Mammary epithelial cell (primary cell): ENCODE measurements at regions of chr2 and their contacts with region 1.

Region 1: GRCh38 chr2:72887754-72888437 is 688 bp downstream of the SPR start:
- DNase-seq: peak; percentile 83
- H3K4me3 ChIP-seq: peak overlapping the region; percentile 66 to 79 (median 75)
- H3K27ac ChIP-seq: no peak overlapping the region
- H3K4me1 ChIP-seq: peaks cover 13% of the 10 kb centered on the region
- H3K27me3 ChIP-seq: no peaks in the 10 kb centered on the region
- CTCF ChIP-seq: peak; percentile 95 to 97

Region 2: DNA sequence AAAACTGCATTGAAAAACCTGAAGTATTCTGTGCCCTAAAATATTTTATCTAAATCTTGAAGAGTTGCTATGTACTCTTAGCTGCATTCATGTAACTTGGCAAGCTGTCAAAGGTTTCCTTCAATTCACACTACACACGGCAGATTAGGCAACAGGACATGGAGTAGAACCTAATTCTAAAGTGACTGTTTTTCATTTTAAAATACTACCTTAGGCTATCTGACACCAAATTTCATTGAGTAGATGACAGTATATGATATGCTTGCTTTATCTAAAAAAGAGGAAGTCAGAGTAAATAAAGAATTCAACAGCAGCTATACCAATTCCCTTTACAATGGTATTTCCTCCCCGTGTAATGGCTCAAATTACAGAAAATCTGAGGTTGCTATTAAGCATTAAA is 107.4 kb before region 1 on chr2:
- CTCF ChIA-PET with region 1: no interaction called
- dilution Hi-C with region 1: loop called (anchors 5 kb)
- in situ Hi-C with region 1: no loop called
- intact Hi-C with region 1: no loop called
- DNase-seq: peak; percentile 53
- H3K4me3 ChIP-seq: no peak overlapping the region
- H3K27ac ChIP-seq: no peak overlapping the region
- H3K4me1 ChIP-seq: peaks cover 14% of the 10 kb centered on the region
- H3K27me3 ChIP-seq: no peaks in the 10 kb centered on the region
- CTCF ChIP-seq: no peak

Region 3: DNA sequence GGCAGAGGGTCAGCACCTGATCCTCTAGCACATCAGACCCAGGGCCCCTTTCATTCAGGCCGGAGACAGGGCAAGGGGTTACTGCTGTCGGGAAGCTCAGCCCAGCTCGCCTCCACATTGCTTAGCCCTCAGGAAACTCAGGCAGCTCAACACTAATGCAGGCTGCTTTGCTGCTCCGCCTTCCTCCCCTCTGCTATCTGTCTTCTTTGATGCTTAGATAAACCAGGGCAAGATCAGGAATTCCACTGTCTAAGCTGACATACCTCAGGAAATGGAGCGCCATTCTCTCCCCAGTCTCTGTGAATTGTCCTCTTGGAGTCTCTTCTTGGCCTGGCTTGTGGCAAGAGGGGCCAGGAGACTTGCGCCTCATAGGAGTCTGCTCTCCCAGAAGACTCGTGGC is 36.6 kb before region 1 on chr2:
- CTCF ChIA-PET with region 1: no interaction called
- dilution Hi-C with region 1: no loop called
- in situ Hi-C with region 1: no loop called
- intact Hi-C with region 1: no loop called
- DNase-seq: no peak
- H3K4me3 ChIP-seq: no peak overlapping the region
- H3K27ac ChIP-seq: no peak overlapping the region
- H3K4me1 ChIP-seq: no peaks in the 10 kb centered on the region
- H3K27me3 ChIP-seq: no peaks in the 10 kb centered on the region
- CTCF ChIP-seq: no peak

Region 4: DNA sequence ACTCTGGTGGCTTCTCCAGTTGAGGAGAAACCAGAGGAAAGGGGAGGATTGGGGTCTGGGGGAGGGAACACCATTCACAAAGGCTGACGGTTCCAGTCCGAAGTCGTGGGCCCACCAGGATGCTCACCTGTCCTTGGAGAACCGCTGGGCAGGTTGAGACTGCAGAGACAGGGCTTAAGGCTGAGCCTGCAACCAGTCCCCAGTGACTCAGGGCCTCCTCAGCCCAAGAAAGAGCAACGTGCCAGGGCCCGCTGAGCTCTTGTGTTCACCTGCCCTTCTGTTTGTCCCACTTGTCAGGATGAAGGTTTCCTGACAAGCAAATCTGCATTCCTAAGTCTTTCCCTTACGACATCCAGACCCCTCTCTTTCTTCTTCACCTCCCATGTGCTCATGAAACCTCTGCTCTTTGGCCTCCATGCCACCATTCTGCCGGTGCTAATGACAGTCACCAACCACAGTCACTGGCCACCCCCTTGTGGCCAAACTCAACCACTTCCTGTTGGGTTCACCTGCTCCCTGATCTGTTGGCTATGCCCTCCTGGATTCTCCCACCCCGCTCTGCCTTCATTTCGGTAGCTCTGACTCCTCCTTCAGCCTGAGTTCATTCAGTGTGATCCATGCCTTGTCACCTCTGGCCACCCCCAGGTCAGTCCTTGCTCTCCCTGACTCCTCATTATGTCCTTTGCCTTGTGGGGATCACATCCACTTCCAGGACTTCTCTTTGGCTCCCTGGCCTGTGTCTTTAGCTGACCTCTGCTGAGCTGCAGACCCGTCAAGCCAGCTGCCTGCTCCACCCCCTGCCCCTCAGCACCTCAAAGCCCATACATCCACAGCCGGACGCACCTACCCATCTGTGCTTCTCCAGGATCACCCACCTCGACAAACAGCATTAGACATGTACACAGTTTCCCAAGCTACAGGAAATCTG is 47.1 kb after region 1 on chr2:
- CTCF ChIA-PET with region 1: interaction called, 14 read pairs
- dilution Hi-C with region 1: no loop called
- in situ Hi-C with region 1: no loop called
- intact Hi-C with region 1: loop called (anchors 1 kb)
- DNase-seq: peak; percentile 82
- H3K4me3 ChIP-seq: no peak overlapping the region
- H3K27ac ChIP-seq: no peak overlapping the region
- H3K4me1 ChIP-seq: peaks cover 28% of the 10 kb centered on the region
- H3K27me3 ChIP-seq: no peaks in the 10 kb centered on the region
- CTCF ChIP-seq: peak; percentile 34 to 61

Region 5: GRCh38 chr2:73071360-73072133 is 183.7 kb after region 1 on chr2 and contains the start of gene SFXN5:
- CTCF ChIA-PET with region 1: no interaction called
- dilution Hi-C with region 1: no loop called
- in situ Hi-C with region 1: no loop called
- intact Hi-C with region 1: loop called (anchors 1 kb)
- DNase-seq: peak; percentile 93
- H3K4me3 ChIP-seq: peak within 1 kb of the TSS; percentile 59 to 91 (median 86)
- H3K27ac ChIP-seq: peak within 1 kb of the TSS; percentile 72
- H3K4me1 ChIP-seq: peaks cover 35% of the 10 kb centered on the region
- H3K27me3 ChIP-seq: no peaks in the 10 kb centered on the region
- CTCF ChIP-seq: peak in 1 of 2 donors; percentile 31
- total RNA-seq, gene SFXN5: 12.0 to 16.8 TPM

Region 6: DNA sequence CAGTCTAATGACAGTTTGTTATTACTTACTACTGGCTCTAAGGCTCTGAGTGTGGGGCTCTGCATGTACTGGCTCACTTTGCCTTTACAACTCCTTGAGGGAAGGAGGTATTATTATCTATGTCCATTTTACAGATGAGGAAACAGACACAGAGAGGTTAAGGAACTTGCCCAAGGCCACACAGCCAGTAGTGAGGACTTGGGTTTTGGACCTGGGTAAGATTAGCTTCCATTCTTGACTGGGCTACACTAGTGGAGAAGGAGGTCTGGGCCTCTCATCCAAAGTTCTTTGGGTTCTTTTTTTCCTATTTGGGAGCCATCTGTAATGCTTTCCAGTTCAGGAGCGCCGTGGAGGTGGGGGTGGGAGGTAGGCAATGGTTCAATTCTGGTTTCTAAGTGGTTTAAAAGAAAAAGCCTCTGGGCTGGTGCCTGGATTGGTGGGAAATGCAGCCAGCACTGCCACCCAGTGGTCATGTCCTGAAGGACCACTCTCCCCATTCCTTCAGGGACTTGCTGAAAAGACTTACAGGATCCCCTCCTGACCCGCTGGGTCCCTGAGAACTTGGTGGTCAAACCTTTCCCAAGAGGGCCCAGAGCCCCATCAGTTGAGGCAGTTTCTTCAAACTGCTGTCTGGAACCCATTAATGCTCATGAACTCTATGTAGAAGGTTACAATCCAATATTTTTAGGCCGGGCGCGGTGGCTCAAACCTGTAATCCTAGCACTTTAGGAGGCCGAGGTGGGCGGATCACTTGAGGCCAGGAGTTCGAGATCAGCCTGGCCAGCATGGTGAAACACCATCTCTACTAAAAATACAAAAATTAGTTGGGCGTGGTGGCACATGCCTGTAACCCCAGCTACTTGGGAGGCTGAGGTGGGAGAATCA is 275.8 kb after region 1 on chr2:
- CTCF ChIA-PET with region 1: no interaction called
- dilution Hi-C with region 1: no loop called
- in situ Hi-C with region 1: loop called in 1 of 2 experiments (anchors 10 kb)
- intact Hi-C with region 1: loop called (anchors 1 kb)
- DNase-seq: peak; percentile 37
- H3K4me3 ChIP-seq: no peak overlapping the region
- H3K27ac ChIP-seq: no peak overlapping the region
- H3K4me1 ChIP-seq: no peaks in the 10 kb centered on the region
- H3K27me3 ChIP-seq: no peaks in the 10 kb centered on the region
- CTCF ChIP-seq: peak; percentile 89 to 90